Lower leg skin (tissue), 4 donors: ENCODE measurements at regions of chr14 and their contacts with region 1.

Region 1: GRCh38 chr14:95561001-95561412 is 26.2 kb downstream of the GLRX5 start:
- DNase-seq: peak; percentile 78 to 96
- H3K4me3 ChIP-seq: no peak overlapping the region
- CTCF ChIP-seq: peak in 1 of 3 donors; percentile 69
- POLR2A ChIP-seq: no peak

Region 2: DNA sequence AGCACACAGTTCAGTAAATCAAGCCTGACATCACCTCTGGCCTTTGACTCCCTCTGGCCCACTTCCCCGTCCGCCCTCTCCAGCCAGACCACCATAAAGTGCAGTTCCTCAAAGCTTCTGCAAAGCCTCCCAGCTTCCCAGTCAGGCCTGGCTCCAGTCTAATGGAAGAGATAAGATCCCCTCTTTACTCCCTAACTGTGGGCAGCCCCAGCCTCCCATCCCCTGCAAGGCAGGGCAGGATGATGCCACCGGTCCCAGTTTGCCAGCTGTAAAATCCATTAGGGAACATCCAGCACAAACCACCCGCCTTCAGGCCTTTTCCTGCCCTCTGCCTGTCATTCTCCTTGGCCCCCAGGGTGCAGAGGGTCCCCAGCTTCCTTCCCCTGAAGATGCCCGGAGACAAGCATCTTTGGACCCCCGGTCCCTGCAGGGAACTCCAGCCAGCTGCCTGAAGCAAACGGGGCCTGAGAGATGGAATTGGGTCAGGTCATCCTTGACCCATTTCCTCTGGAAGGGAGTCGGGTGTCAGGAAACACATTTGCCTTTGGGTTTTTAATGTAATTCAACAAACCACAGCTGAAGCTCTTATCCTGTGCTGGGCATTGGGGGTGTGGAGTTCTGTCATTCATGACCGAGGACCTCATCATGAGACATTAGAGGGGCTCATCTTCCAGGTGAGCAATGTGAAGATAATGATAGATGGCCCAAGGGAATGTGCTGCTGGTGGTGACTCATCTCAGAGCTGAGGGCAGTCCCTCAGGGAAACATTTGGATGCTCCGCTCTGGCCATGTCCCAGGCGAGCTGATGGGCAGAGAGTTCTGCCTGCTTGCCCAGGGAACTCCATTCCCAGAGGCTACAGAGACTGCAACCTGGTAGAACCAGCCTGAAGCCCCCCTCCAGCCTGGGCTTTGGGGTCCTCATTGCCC is 147.5 kb before region 1 on chr14:
- intact Hi-C with region 1: no loop called
- DNase-seq: no peak
- H3K4me3 ChIP-seq: no peak overlapping the region
- CTCF ChIP-seq: no peak
- POLR2A ChIP-seq: no peak

Region 3: DNA sequence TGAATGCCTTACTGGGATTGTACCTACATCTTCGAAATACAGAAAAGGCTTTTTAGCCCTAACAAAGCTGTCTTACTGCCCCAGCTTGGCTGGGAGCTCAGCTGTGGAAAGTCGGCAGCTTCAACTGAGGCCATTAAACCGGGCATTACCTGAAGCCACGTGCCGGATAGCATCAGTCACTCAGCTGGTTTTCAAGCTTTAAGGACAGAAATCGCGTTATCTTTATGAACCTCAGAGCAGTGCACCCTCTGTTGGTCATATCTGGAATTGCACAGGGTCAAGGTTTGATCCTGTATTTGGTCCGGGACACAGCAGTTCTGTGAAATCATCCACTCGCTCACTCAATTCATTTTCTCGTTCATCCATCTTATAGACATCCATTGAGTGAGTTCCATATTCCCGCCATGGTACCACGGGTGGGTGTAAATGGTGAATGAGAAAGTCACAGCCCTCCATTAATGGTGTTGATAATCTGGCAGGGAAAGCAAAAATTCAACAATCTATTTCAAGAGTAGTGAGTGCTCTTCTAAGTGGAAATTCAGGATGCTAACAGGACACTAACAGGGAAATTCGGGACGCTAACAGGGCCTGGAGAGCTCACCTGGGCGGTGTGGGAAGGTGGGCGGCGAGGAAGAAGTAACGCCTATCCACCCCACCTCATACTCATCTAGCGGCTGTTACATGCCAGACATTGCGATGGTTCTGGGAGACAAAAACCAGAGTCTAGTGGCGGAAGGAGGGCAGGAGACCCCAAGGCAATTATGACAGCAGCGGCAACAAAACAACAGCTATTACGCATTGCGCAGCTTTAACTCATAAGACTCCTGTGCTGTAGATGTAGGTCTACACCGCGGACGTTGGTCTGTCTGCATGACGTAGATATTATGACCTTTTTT is 213.5 kb after region 1 on chr14:
- intact Hi-C with region 1: loop called (anchors 10 kb)
- DNase-seq: peak; percentile 32 to 86
- H3K4me3 ChIP-seq: no peak overlapping the region
- CTCF ChIP-seq: peak in 1 of 3 donors; percentile 56
- POLR2A ChIP-seq: no peak

Region 4: DNA sequence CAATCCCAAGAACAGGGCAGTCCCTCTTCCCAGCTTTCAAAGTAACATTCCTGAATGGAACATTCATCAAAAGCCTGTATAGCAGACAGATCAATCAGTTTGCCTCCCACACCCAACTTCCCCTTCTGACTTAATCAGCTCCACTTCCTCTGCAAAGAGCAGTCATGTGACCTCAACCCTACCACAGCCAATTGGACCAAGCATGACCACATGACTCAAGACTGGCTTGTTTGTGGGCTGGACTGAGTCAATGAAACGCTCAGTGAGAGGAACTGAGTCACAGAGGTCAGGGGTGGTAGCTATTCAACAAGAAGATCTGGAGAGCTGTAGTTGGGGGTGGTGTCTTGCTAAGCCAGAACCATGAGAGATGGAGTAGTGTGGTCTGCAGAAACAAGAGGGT is 274.3 kb after region 1 on chr14:
- intact Hi-C with region 1: no loop called
- DNase-seq: no peak
- H3K4me3 ChIP-seq: no peak overlapping the region
- CTCF ChIP-seq: no peak
- POLR2A ChIP-seq: no peak

Region 5: GRCh38 chr14:95993768-95994592 is 433.0 kb after region 1 on chr14:
- intact Hi-C with region 1: loop called (anchors 5 kb)
- DNase-seq: no peak
- H3K4me3 ChIP-seq: no peak overlapping the region
- CTCF ChIP-seq: no peak
- POLR2A ChIP-seq: no peak